CD8-positive, alpha-beta memory T cell (primary cell): ENCODE measurements at regions of chr9 and their contacts with region 1.

Region 1: DNA sequence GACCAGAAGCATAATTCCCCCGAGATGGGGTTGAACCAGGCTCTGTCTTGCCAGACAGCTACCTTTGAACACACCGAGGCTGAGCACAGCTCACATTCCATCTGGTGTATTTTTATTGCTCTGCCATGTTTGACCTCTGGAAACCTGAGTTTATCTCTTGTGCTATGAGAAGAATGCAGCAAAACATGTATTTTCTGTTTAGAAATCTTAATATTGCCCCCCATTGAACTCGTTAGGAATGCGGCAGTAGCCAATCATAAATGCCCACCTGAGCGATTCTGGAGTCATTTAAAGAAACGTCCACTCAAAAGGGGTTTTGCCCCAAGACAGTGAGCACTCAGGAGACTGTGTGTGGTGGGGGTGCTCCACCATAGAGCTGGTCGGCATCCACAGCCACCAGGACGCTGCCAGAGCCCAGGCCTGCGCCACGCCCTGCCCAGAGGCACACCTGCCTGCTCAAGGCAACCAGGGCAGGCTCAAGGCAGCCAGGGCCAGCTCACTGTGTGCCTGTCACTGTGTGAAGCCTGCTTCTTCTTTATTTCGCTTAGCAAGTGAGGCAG is 26.9 kb downstream of the FGD3 start:
- DNase-seq: no peak
- H3K4me3 ChIP-seq: no peak overlapping the region
- H3K4me3 Mint-ChIP-seq: peak overlapping the region in 5 of 7 donors; percentile 48 to 74 (median 51)
- H3K27ac ChIP-seq: no peak overlapping the region
- H3K27ac Mint-ChIP-seq: peak overlapping the region; percentile 44 to 95 (median 92)
- H3K4me1 ChIP-seq: peaks cover 94% of the 10 kb centered on the region
- H3K4me1 Mint-ChIP-seq: peaks cover 74 to 97% (median 87%) of the 10 kb centered on the region in 3 donors
- H3K27me3 ChIP-seq: no peaks in the 10 kb centered on the region
- H3K27me3 Mint-ChIP-seq: no peaks in the 10 kb centered on the region

Region 2: GRCh38 chr9:92954049-92954861 is 20.0 kb before region 1 on chr9:
- CTCF ChIA-PET with region 1: interaction called, 10 read pairs
- POLR2A ChIA-PET with region 1: interaction called, 8 read pairs
- DNase-seq: peak; percentile 66 to 93 (median 89)
- H3K4me3 ChIP-seq: peak overlapping the region; percentile 63
- H3K4me3 Mint-ChIP-seq: peak overlapping the region; percentile 76 to 95 (median 85)
- H3K27ac ChIP-seq: peak overlapping the region; percentile 26
- H3K27ac Mint-ChIP-seq: peak overlapping the region; percentile 92 to 99 (median 97)
- H3K4me1 ChIP-seq: peaks cover 84% of the 10 kb centered on the region
- H3K4me1 Mint-ChIP-seq: peaks cover 79 to 89% (median 84%) of the 10 kb centered on the region in 3 donors
- H3K27me3 ChIP-seq: no peaks in the 10 kb centered on the region
- H3K27me3 Mint-ChIP-seq: no peaks in the 10 kb centered on the region

Region 3: DNA sequence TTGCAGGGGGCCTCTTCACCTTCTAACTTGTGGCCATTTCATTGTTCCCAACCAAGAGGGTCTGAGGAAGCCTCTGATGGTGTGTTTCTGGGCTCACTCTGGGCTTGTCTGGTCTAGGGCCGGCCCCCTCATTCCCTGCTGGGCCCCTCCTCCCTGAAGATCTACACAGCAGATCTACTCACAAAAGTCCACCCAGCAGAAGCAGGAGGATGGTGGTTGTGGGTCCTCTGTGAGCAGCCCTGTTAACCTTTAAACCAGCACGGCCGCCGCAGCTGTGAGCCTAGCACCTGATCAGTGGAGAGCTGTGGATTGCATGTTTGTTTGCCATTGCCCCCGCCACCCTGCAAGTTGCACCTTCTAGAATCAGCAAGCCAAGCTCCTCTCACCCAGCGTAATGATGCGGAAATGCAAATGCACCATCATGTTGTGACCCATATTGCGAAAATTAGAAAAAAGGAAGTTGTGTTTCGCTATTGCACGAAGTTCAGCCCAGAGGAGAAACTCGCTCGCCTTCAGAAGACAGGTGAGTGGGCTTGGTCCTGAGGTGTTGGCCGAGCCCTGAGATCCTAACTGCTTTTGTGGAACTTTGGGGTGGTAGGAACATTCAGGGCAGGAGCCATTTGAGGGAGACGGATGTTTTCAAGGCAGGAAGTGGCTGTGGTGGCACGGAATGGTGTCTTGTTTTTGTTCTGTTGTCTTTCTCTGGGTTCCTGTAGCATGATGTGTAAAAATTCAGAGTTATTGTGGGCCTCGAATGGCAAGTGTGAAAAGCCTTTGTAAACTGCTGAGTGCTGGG is 10.2 kb before region 1 on chr9:
- CTCF ChIA-PET with region 1: interaction called, 12 read pairs
- POLR2A ChIA-PET with region 1: interaction called, 3 read pairs
- DNase-seq: peak; percentile 64 to 93 (median 89)
- H3K4me3 ChIP-seq: peak overlapping the region; percentile 73
- H3K4me3 Mint-ChIP-seq: peak overlapping the region; percentile 91 to 95 (median 93)
- H3K27ac ChIP-seq: peak overlapping the region; percentile 90
- H3K27ac Mint-ChIP-seq: peak overlapping the region; percentile 92 to 99 (median 98)
- H3K4me1 ChIP-seq: peaks cover 71% of the 10 kb centered on the region
- H3K4me1 Mint-ChIP-seq: peaks cover 61 to 69% (median 67%) of the 10 kb centered on the region in 3 donors
- H3K27me3 ChIP-seq: no peaks in the 10 kb centered on the region
- H3K27me3 Mint-ChIP-seq: peaks cover 0 to 1% of the 10 kb centered on the region in 2 donors